BJ (cell line): ENCODE measurements at regions of chr2 and their contacts with region 1.

Region 1: DNA sequence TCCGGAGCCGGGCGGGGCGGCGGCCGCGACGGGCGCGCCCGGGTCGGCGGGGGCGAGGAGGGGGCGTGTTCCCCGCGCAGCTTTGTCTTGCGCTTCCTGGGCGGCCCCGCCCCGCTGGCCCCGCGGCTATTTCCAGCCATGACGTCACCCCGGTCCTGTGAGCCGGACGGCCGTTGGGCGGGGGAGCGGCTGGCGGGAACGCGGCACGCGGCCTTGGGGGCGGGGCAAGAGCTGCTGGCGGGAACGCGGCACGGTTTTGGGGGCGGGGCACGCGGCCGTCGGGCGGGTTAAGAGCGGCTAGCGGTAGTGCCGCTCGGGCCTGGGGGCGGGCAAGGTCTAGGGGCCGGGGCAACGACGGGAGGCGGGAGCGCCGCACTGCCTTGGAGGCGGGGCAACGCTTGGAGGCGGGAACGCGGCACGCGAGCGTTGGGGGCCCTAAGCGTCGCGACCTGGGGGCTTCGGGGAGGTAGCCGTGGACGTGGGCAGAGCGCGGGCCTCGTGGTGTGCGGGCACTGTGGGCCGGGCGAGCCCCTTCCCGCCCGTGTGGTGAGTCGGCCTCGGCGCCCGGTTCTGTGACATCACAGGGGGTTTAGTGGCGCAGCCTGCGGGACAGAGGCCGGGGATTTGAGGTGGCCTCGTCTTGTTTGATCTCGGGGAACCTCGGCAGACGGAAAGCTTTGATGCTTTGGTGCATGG is 704 bp downstream of the KLF11 start:
- DNase-seq: peak; percentile 63
- H3K4me3 ChIP-seq: peak overlapping the region; percentile 79
- H3K27me3 ChIP-seq: no peaks in the 10 kb centered on the region
- CTCF ChIP-seq: no peak

Region 2: DNA sequence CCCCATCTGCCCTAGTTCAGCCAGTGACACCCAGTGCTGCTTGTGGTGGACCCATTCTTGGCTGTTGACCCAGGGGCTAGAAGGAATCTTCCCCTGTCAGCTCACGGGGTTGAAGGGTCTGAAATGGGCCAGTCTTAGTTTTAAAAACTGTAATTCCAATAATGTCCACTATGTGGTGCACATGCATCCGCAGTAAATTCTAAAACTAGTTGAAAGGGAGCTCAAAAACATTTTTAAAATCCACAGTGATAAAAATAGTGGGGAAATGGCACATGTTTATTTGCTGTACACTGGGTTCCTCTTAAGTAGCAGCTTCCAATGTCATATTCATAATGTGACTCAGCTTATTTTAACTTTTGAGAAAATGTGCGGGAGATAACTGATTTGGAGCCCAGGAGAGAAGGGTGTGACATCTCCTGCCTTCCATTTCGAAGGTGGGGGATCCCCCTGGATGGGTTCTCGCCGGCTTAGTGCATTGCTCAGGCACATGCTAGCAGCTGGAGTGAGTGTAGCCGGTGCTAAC is 59.8 kb before region 1 on chr2:
- CTCF ChIA-PET with region 1: interaction called, 44 read pairs
- POLR2A ChIA-PET with region 1: no interaction called
- DNase-seq: no peak
- H3K4me3 ChIP-seq: no peak overlapping the region
- H3K27me3 ChIP-seq: no peaks in the 10 kb centered on the region
- CTCF ChIP-seq: peak; percentile 64

Region 3: GRCh38 chr2:10057231-10058107 is 13.4 kb after region 1 on chr2:
- CTCF ChIA-PET with region 1: interaction called, 13 read pairs
- POLR2A ChIA-PET with region 1: no interaction called
- DNase-seq: no peak
- H3K4me3 ChIP-seq: peak overlapping the region; percentile 3; the same call in 1 of the 2 replicates
- H3K27me3 ChIP-seq: no peaks in the 10 kb centered on the region; the same call in 1 of the 2 replicates
- CTCF ChIP-seq: no peak